BJ (cell line): ENCODE measurements at regions of chr10 and their contacts with region 1.

Region 1: GRCh38 chr10:33008499-33009243 is 50.6 kb upstream of the ITGB1 start:
- DNase-seq: no peak
- H3K4me3 ChIP-seq: no peak overlapping the region
- H3K27me3 ChIP-seq: no peaks in the 10 kb centered on the region
- CTCF ChIP-seq: peak; percentile 97

Region 2: DNA sequence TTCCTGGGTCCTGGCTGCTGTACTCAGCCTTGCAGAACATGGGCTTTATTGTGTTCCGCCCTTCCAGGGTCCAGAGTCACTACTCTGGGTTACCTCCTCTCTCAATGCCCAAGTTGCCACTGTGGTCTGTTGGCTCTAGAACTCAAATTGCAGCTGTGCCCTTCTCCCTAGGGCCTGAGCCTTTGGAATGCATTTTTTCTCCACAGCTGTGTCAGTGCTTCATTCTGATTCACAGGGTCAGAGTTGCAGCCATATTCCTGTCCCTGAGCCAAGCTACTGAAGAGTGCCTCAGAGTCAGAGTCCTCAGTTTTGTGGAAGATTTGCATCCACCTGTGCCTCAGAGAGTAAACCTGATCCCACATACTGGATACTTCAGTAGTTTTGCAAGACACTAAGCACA is 218.2 kb before region 1 on chr10:
- CTCF ChIA-PET with region 1: interaction called, 20 read pairs
- POLR2A ChIA-PET with region 1: no interaction called
- DNase-seq: no peak
- H3K4me3 ChIP-seq: no peak overlapping the region
- H3K27me3 ChIP-seq: no peaks in the 10 kb centered on the region
- CTCF ChIP-seq: no peak

Region 3: DNA sequence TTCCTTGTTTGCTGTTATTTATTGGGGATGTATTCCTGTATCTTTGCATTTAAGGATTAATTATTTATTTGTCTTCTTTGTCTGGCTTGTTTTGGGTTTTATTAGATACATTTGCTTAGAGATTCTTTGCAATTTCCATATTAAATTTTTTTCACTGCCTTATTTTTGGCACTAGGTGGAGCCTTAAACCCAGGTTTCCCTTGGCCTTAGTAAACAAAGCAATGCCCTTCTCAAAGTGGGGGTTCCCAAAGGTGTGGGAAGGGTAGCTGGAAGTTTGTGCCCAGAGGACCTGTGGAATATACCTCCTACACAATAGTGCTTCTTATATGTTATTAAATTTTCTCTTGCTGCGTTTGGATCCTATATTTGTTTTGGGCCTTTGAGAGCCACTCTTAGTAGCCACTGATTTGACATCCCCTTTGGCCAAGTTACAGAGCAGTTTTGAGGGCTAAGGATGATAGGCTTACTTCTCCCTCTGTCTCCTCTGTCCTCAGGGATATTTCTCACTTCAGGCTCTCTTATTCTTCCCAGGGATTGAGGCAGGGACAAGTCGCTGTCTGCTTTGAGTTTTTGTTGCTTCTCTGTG is 213.0 kb before region 1 on chr10:
- CTCF ChIA-PET with region 1: interaction called, 20 read pairs
- POLR2A ChIA-PET with region 1: no interaction called
- DNase-seq: no peak
- H3K4me3 ChIP-seq: no peak overlapping the region
- H3K27me3 ChIP-seq: no peaks in the 10 kb centered on the region
- CTCF ChIP-seq: peak; percentile 73

Region 4: GRCh38 chr10:32995751-32996150 is 12.9 kb before region 1 on chr10:
- CTCF ChIA-PET with region 1: no interaction called
- POLR2A ChIA-PET with region 1: no interaction called
- DNase-seq: no peak
- H3K4me3 ChIP-seq: no peak overlapping the region
- H3K27me3 ChIP-seq: no peaks in the 10 kb centered on the region
- CTCF ChIP-seq: no peak

Region 5: DNA sequence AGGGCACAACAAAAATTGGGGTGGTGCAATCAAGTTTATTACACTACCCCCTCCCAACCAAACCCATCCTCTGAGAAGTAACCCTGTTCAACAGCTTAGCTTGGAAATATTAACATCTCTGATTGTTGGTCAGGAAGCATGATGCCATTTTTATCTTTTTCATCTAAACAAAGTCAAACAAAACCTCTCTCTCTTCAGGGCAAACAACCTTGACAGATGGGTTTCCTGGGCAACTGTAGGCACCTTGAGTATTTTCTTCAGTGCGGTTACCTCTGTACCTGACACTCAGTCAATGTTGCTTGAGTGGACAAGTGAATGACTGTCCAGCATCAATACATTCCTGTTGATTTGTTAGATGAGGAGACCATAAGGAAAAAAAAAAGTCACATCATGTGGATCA is 142.2 kb after region 1 on chr10:
- CTCF ChIA-PET with region 1: interaction called, 11 read pairs
- POLR2A ChIA-PET with region 1: no interaction called
- DNase-seq: no peak
- H3K4me3 ChIP-seq: no peak overlapping the region
- H3K27me3 ChIP-seq: no peaks in the 10 kb centered on the region
- CTCF ChIP-seq: no peak